Activated B cell treated with CpG ODN at 0.5 μM for 24 hours (primary cell): ENCODE measurements at regions of chr15 and their contacts with region 1.

Region 1: GRCh38 chr15:40952901-40953712 is at the start of gene CHAC1:
- DNase-seq: peak; percentile 88
- ATAC-seq: peak; percentile 94
- H3K4me3 Mint-ChIP-seq: peak within 1 kb of the TSS; percentile 93
- H3K27ac Mint-ChIP-seq: peak within 1 kb of the TSS; percentile 92
- H3K4me1 Mint-ChIP-seq: peaks cover 23% of the 10 kb centered on the region
- H3K27me3 Mint-ChIP-seq: peaks cover 7% of the 10 kb centered on the region
- CTCF ChIP-seq: no peak
- total RNA-seq, gene CHAC1: 22.3 and 27.3 TPM in 2 replicates

Region 2: GRCh38 chr15:40847205-40847961 is 105.7 kb before region 1 on chr15:
- CTCF ChIA-PET with region 1: no interaction called
- POLR2A ChIA-PET with region 1: no interaction called
- intact Hi-C with region 1: loop called (anchors 5 kb)
- DNase-seq: no peak
- ATAC-seq: peak; percentile 53
- H3K4me3 Mint-ChIP-seq: peak overlapping the region; percentile 38
- H3K27ac Mint-ChIP-seq: peak overlapping the region; percentile 64
- H3K4me1 Mint-ChIP-seq: peaks cover 39% of the 10 kb centered on the region
- H3K27me3 Mint-ChIP-seq: no peaks in the 10 kb centered on the region
- CTCF ChIP-seq: no peak

Region 3: GRCh38 chr15:40928821-40929659 is 24.1 kb before region 1 on chr15 and contains the start of gene DLL4:
- CTCF ChIA-PET with region 1: interaction called, 3 read pairs
- POLR2A ChIA-PET with region 1: interaction called, 8 read pairs
- intact Hi-C with region 1: loop called (anchors 2 kb)
- DNase-seq: peak; percentile 45
- ATAC-seq: peak; percentile 43
- H3K4me3 Mint-ChIP-seq: peak within 1 kb of the TSS; percentile 77
- H3K27ac Mint-ChIP-seq: no peak within 1 kb of the TSS
- H3K4me1 Mint-ChIP-seq: peaks cover 55% of the 10 kb centered on the region
- H3K27me3 Mint-ChIP-seq: peaks cover 53% of the 10 kb centered on the region
- CTCF ChIP-seq: no peak
- total RNA-seq, gene DLL4: 0.05 TPM in 1 of 2 replicates, not detected in the other